ENCODE measurements at regions of chr19 and their contacts with region 1.

Region 1: GRCh38 chr19:18557474-18558201 is at the start of gene KXD1:
- DNase-seq: peak; percentile 93 to 94
- H3K4me3 ChIP-seq: peak within 1 kb of the TSS; percentile 95
- H3K27ac ChIP-seq: peak within 1 kb of the TSS; percentile 78
- H3K4me1 ChIP-seq: 0 out of 2 replicates have a peak, but pooled peaks cover 10% of the 10 kb centered on the region
- H3K27me3 ChIP-seq: no peaks in the 10 kb centered on the region
- CTCF ChIP-seq: 0 out of 2 replicates have a peak, but pooled peaks have one; percentile 17
- total RNA-seq, gene KXD1: 97.0 and 101 TPM in 2 replicates

Region 2: GRCh38 chr19:18281082-18282020 is 276.3 kb before region 1 on chr19 and contains the start of gene JUND:
- CTCF ChIA-PET with region 1: no interaction called
- POLR2A ChIA-PET with region 1: no interaction called
- intact Hi-C with region 1: no loop called
- DNase-seq: peak; percentile 91 to 99
- H3K4me3 ChIP-seq: peak within 1 kb of the TSS; percentile 93
- H3K27ac ChIP-seq: peak within 1 kb of the TSS; percentile 97
- H3K4me1 ChIP-seq: peaks cover 21% of the 10 kb centered on the region
- H3K27me3 ChIP-seq: no peaks in the 10 kb centered on the region
- CTCF ChIP-seq: no peak
- total RNA-seq, gene JUND: 115 and 150 TPM in 2 replicates

Region 3: GRCh38 chr19:18496167-18496979 is 61.3 kb before region 1 on chr19:
- CTCF ChIA-PET with region 1: interaction called, 10 read pairs
- POLR2A ChIA-PET with region 1: no interaction called
- intact Hi-C with region 1: no loop called
- DNase-seq: peak; percentile 69 to 83
- H3K4me3 ChIP-seq: no peak overlapping the region
- H3K27ac ChIP-seq: peak overlapping the region; percentile 29
- H3K4me1 ChIP-seq: peaks cover 24% of the 10 kb centered on the region
- H3K27me3 ChIP-seq: no peaks in the 10 kb centered on the region
- CTCF ChIP-seq: no peak; the same call in 1 of the 2 replicates

Region 4: DNA sequence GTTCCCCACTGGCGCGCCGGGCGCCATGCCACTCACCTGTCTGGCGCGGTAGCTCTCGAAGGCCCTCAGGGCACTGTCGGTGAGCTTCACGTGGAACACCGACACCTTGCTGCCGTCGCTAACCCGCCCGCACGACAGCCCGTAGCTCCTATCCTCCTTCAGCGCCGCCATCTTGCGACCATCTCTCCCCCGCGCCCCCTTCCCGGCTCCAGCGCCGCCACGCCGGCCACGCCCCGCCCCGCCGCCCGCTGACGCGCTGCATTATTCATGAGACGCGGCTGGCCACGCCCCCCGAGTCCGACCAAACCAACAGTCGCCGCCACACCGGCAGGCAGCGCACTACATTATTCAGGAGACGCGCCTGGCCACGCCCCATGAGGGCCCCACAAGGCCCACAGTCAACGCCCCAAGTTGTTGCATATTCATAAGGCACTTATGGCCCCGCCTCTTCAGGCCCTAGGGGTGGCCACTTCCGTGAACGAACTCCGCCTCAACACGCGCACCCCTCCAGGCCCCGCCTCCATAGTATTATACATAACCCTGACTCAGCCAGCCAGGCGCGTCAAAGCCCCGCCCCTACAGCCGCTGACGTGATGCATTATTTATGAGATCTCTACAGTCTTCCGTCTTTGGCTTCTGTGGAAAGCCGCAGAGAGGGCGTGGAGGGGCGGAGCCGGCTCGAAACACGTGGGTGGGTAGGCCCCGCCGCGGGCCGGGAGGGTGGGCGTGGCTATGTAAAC is 35.6 kb before region 1 on chr19 and contains the start of gene ELL:
- CTCF ChIA-PET with region 1: no interaction called
- POLR2A ChIA-PET with region 1: interaction called, 3 read pairs
- intact Hi-C with region 1: loop called (anchors 1 kb)
- DNase-seq: peak; percentile 99
- H3K4me3 ChIP-seq: peak within 1 kb of the TSS; percentile 94
- H3K27ac ChIP-seq: peak within 1 kb of the TSS; percentile 75
- H3K4me1 ChIP-seq: peaks cover 31% of the 10 kb centered on the region
- H3K27me3 ChIP-seq: no peaks in the 10 kb centered on the region
- CTCF ChIP-seq: no peak
- total RNA-seq, gene ELL: 12.9 and 14.6 TPM in 2 replicates

Region 5: GRCh38 chr19:18588611-18589379 is 31.2 kb after region 1 on chr19 and contains the start of gene REX1BD:
- CTCF ChIA-PET with region 1: interaction called, 8 read pairs
- POLR2A ChIA-PET with region 1: interaction called, 14 read pairs
- intact Hi-C with region 1: no loop called
- DNase-seq: peak; percentile 66 to 81
- H3K4me3 ChIP-seq: peak within 1 kb of the TSS; percentile 79
- H3K27ac ChIP-seq: peak within 1 kb of the TSS; percentile 64
- H3K4me1 ChIP-seq: peaks cover 11% of the 10 kb centered on the region
- H3K27me3 ChIP-seq: no peaks in the 10 kb centered on the region
- CTCF ChIP-seq: peak; percentile 92
- total RNA-seq, gene REX1BD: 44.8 and 64.3 TPM in 2 replicates

Region 6: DNA sequence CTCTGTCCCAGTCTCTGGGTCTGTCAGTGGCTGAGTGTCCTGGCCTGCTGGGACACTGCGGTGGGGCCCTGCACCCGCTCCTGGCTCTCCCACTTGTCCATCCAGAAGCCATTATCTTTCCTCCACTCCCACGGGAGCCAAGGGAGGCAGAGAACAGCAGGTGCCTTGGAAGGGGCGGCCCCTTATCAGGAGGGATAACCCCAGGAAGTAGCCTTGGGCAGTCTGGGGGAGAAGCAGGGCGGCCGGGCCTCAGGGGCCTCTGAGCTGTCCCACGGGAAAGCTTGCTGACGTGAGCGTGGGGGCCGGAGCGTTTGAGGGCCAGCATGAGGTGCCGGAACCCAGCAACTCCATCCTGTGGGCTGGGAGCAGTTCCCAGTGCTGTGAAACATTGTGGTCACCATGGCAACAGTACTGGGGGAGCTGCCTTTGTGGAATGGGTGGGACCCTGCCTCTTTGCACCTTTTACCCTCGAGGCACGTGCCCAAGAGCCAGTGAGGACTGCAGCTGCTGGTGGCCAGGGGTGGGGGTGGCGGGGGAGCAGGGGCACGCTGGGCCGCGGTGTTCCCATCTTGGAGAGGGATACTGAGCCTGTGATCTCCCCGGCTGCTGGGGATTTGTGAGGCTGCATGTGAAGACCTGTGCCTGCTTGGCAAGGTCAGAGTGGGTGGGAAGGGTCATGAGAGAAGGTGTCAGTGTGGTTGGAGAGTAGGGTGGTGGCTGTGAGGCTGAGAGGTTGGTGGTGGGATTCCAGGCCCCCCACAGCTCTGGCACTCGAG is 100.1 kb after region 1 on chr19:
- CTCF ChIA-PET with region 1: no interaction called
- POLR2A ChIA-PET with region 1: no interaction called
- intact Hi-C with region 1: no loop called
- DNase-seq: peak in 1 of 2 experiments; percentile 31
- H3K4me3 ChIP-seq: no peak overlapping the region
- H3K27ac ChIP-seq: no peak overlapping the region
- H3K4me1 ChIP-seq: no peaks in the 10 kb centered on the region
- H3K27me3 ChIP-seq: no peaks in the 10 kb centered on the region
- CTCF ChIP-seq: no peak

Region 7: DNA sequence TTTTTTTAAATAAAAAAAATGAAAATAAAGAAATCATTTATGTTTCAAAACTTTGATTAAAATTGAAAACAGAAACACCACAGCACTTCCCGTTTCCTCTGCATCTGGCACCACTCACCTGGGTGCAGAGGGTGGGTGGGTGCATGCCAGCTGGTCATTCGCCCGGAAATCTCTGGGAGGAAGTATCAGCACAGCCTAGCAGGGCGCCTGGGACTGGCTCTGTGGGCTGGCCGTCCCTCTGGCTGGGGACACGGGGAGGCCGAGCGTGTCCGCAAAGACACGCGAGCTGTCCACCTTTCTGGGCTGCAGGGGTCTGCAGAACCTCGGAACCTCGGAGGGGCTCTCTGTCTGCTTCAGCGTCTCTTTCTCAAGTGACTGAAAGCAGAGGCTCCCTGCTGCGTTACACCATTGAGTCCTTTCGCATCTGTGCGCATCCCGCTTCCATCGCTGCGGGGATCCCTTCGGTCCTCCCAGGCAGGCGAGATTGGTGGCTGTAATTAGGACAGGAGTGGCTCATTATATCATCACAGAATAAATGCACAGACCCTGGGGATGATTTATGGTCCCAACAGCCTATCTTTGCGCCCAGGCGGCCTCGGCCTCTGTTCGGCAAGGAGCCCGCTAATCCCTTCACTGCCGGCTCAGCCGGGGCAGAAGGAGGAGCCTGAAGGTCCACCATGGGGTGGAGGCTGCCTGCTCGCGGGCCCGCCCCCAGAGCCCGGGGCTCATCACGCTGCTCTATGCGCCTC is 143.0 kb after region 1 on chr19:
- CTCF ChIA-PET with region 1: no interaction called
- POLR2A ChIA-PET with region 1: no interaction called
- intact Hi-C with region 1: no loop called
- DNase-seq: no peak
- H3K4me3 ChIP-seq: no peak overlapping the region
- H3K27ac ChIP-seq: no peak overlapping the region
- H3K4me1 ChIP-seq: peaks cover 12% of the 10 kb centered on the region; the same call in 1 of the 2 replicates
- H3K27me3 ChIP-seq: no peaks in the 10 kb centered on the region
- CTCF ChIP-seq: no peak